CD4-positive, alpha-beta memory T cell (primary cell): ENCODE measurements at regions of chr20 and their contacts with region 1.

Region 1: DNA sequence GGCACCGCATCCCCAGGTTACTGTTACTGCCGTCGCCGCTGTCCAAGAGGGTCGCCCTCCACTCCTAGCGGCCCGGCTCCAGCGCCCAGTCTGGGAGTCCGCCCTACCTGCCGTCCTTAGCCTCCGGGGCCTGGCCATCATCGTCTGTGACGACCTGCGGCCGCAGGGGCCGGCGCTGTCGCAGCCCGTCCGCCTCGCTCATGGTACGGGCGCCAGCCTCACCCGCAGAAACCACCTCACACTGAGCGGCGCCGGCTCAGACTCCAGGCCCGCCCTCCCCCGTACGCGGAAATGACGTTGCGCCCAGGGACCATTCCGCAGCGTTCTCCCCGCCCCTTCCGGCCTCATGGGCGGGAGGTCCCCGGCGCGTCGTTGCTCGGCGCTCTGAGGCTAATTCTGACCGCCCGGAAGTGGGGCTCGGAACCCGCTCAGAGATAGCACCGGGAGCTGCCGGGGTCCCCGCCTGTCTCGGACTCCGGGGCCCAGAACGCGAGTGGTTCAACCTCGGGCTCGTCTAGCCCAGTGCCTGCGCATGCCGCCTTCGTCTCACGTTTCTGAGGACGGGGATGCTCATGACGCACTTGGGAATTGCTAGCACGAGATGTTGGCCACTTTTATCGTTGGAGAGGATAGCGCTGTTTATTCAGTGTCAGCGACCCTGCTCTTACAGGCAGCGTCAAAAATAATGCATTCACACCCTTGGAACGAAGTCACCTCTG is at the start of gene APMAP:
- DNase-seq: peak; percentile 94 to 97 (median 94)
- H3K4me3 ChIP-seq: peak within 1 kb of the TSS; percentile 55 to 93
- H3K4me3 Mint-ChIP-seq: peak within 1 kb of the TSS; percentile 93 to 98 (median 95)
- H3K27ac ChIP-seq: peak within 1 kb of the TSS; percentile 96
- H3K27ac Mint-ChIP-seq: peak within 1 kb of the TSS; percentile 95 to 99 (median 97)
- H3K4me1 ChIP-seq: peaks cover 49% of the 10 kb centered on the region
- H3K4me1 Mint-ChIP-seq: peaks cover 36 to 72% (median 54%) of the 10 kb centered on the region in 4 donors
- H3K27me3 ChIP-seq: no peaks in the 10 kb centered on the region
- H3K27me3 Mint-ChIP-seq: no peaks in the 10 kb centered on the region
- total RNA-seq, gene APMAP: 48.4 to 50.0 TPM

Region 2: GRCh38 chr20:23350196-23350903 is 1642.3 kb before region 1 on chr20 and contains the start of gene NXT1:
- CTCF ChIA-PET with region 1: no interaction called
- POLR2A ChIA-PET with region 1: no interaction called
- intact Hi-C with region 1: loop called (anchors 5 kb)
- DNase-seq: peak; percentile 96 to 98 (median 96)
- H3K4me3 ChIP-seq: peak within 1 kb of the TSS; percentile 93 to 97
- H3K4me3 Mint-ChIP-seq: peak within 1 kb of the TSS; percentile 85 to 99 (median 98)
- H3K27ac ChIP-seq: peak within 1 kb of the TSS; percentile 100
- H3K27ac Mint-ChIP-seq: peak within 1 kb of the TSS; percentile 99 to 100 (median 100)
- H3K4me1 ChIP-seq: peaks cover 21% of the 10 kb centered on the region
- H3K4me1 Mint-ChIP-seq: peaks cover 14 to 38% (median 23%) of the 10 kb centered on the region in 4 donors
- H3K27me3 ChIP-seq: no peaks in the 10 kb centered on the region
- H3K27me3 Mint-ChIP-seq: no peaks in the 10 kb centered on the region
- total RNA-seq, gene NXT1: 21.5 to 23.6 TPM

Region 3: DNA sequence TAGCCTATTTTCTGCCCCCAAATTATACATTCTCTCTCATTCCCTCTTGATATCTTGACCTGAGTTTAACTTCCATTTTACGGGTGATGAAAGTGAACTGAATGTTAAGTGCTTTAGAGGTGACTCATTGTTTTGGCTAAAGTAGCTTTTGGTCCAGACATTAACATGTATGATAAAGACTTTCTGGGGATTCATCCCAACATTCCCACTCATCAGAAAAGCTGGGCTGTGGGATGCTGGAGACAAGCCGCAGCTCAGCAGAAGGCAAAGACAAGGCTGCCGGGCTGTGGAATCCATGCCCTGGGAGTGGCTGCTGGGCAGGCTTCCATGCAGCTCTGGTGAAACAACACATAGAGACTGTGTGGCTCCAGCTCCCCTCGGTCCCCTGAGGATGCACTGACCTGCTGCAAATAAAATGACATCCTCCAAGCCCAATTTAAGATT is 613.1 kb before region 1 on chr20:
- CTCF ChIA-PET with region 1: no interaction called
- POLR2A ChIA-PET with region 1: no interaction called
- intact Hi-C with region 1: no loop called
- DNase-seq: no peak
- H3K4me3 ChIP-seq: no peak overlapping the region
- H3K4me3 Mint-ChIP-seq: no peak overlapping the region
- H3K27ac ChIP-seq: no peak overlapping the region
- H3K27ac Mint-ChIP-seq: no peak overlapping the region
- H3K4me1 ChIP-seq: no peaks in the 10 kb centered on the region
- H3K4me1 Mint-ChIP-seq: no peaks in the 10 kb centered on the region
- H3K27me3 ChIP-seq: no peaks in the 10 kb centered on the region
- H3K27me3 Mint-ChIP-seq: peaks cover 0 to 2% of the 10 kb centered on the region in 2 donors

Region 4: DNA sequence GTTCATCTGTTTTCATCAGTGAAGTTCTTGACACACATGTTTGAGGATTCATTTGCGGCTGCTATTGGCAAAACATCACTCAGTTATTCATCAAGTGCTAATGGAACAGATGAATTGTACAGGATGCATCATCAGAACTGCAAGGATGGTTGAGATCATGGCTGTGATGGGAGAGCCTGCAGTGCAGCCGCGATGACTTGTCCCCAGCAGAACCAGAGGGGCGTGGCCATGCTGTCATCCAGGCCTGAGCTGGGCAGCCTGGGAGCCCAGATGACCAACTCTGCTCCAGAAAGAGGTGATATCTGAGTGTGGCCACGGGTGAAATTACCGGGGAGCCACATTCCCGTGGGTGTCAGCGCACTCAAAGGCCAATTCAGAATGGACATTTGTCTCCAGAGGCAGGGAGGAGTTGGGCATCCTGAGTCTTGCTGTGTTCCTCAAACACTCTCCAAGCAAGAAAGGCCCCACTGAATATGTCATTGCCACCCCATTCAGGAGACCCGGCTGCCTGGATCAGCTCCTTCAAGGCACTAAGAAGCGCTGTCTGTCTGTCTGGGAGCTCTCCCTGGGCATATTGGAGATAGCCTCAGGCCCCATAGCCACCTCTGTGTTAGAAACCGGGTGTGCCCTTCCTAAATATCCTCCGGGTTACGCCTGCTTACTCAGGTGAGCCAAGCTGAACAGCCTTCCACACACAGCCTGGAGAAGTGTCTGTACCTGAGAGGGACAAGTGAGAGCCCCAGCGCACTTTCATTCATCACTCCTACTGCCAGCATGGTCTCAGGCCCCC is 456.5 kb before region 1 on chr20:
- CTCF ChIA-PET with region 1: no interaction called
- POLR2A ChIA-PET with region 1: no interaction called
- intact Hi-C with region 1: no loop called
- DNase-seq: no peak
- H3K4me3 ChIP-seq: no peak overlapping the region
- H3K4me3 Mint-ChIP-seq: no peak overlapping the region
- H3K27ac ChIP-seq: no peak overlapping the region
- H3K27ac Mint-ChIP-seq: no peak overlapping the region
- H3K4me1 ChIP-seq: no peaks in the 10 kb centered on the region
- H3K4me1 Mint-ChIP-seq: no peaks in the 10 kb centered on the region
- H3K27me3 ChIP-seq: no peaks in the 10 kb centered on the region
- H3K27me3 Mint-ChIP-seq: peaks cover 0 to 8% of the 10 kb centered on the region in 2 donors

Region 5: GRCh38 chr20:24948939-24949679 is 43.5 kb before region 1 on chr20 and contains the start of gene CST7:
- CTCF ChIA-PET with region 1: interaction called, 4 read pairs
- POLR2A ChIA-PET with region 1: interaction called, 17 read pairs
- intact Hi-C with region 1: loop called (anchors 1 kb)
- DNase-seq: peak; percentile 85 to 94 (median 87)
- H3K4me3 ChIP-seq: peak within 1 kb of the TSS in 1 of 2 donors; percentile 41
- H3K4me3 Mint-ChIP-seq: peak within 1 kb of the TSS; percentile 65 to 91 (median 84)
- H3K27ac ChIP-seq: peak within 1 kb of the TSS; percentile 65
- H3K27ac Mint-ChIP-seq: peak within 1 kb of the TSS; percentile 81 to 99 (median 96)
- H3K4me1 ChIP-seq: peaks cover 36% of the 10 kb centered on the region
- H3K4me1 Mint-ChIP-seq: peaks cover 32 to 80% (median 57%) of the 10 kb centered on the region in 4 donors
- H3K27me3 ChIP-seq: no peaks in the 10 kb centered on the region
- H3K27me3 Mint-ChIP-seq: no peaks in the 10 kb centered on the region
- total RNA-seq, gene CST7: 23.2 to 23.3 TPM

Region 6: DNA sequence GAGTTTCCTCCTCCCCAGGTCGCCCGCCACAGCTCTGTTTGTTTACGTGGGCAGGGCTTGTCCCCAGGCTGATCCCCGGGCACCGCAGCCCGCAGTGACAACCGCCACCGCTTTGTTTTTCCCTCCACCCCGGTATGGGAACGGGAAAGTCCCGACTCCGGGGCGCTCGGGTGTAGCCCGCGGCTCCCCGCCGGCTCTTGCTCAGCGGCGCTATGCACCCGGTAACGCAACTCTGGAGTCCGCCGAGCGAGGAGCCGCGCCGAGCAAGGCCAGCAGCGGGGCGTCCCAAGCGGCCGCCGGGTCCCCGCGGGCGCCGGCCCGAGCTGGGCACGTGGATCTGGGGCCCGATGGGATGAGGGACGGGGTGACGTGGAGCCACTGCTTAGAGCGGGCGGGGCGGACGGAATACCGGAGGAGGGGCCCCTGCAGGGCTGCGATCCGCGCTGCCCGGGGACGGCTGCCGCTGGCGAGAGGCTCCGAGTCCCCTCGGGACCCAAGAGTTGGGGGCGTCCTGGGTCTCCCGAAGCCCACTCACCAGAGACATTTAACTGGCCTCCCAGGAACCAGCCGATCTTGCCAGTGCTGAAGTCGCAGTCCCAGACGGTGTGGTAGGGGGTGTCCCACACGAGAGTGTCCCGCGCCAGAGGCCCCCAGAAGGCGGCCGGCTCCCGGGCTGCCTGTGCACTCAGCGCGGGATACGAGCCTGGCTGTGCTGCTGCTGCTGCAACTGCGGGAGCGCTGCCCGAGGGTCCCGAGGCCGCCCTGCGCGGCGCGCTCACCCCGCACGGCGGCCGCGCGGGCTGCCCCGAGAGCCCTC is 64.8 kb after region 1 on chr20:
- CTCF ChIA-PET with region 1: interaction called, 260 read pairs
- POLR2A ChIA-PET with region 1: interaction called, 60 read pairs
- intact Hi-C with region 1: loop called (anchors 1 kb)
- DNase-seq: peak; percentile 84 to 93 (median 87)
- H3K4me3 ChIP-seq: peak overlapping the region; percentile 17 to 84
- H3K4me3 Mint-ChIP-seq: peak overlapping the region; percentile 87 to 93 (median 90)
- H3K27ac ChIP-seq: peak overlapping the region; percentile 82
- H3K27ac Mint-ChIP-seq: peak overlapping the region; percentile 88 to 96 (median 94)
- H3K4me1 ChIP-seq: peaks cover 58% of the 10 kb centered on the region
- H3K4me1 Mint-ChIP-seq: peaks cover 35 to 68% (median 47%) of the 10 kb centered on the region in 4 donors
- H3K27me3 ChIP-seq: no peaks in the 10 kb centered on the region
- H3K27me3 Mint-ChIP-seq: peaks cover 0 to under 1% of the 10 kb centered on the region in 2 donors

Region 7: DNA sequence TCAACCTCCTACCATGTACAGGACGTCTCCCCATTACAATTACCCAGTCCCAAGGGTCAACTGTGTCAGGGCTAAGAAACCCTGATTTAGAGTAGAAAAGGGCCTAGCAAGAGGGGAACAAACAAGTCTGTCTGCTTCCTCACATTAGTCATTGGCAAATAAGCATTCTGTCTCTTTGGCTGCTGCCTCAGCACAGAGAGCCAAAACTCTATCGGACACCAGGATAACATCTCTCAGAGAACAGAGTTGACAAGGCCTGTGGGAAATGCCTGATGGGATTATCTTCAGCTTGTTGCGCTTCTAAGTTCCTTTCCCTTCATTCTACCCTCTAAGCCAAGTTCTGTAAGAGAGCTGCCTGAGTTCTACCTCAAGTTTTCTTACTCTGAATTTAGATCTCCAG is 108.3 kb after region 1 on chr20:
- CTCF ChIA-PET with region 1: no interaction called
- POLR2A ChIA-PET with region 1: no interaction called
- intact Hi-C with region 1: no loop called
- DNase-seq: no peak
- H3K4me3 ChIP-seq: no peak overlapping the region
- H3K4me3 Mint-ChIP-seq: no peak overlapping the region
- H3K27ac ChIP-seq: no peak overlapping the region
- H3K27ac Mint-ChIP-seq: no peak overlapping the region
- H3K4me1 ChIP-seq: peaks cover 7% of the 10 kb centered on the region
- H3K4me1 Mint-ChIP-seq: peaks cover 7 to 11% (median 8%) of the 10 kb centered on the region in 4 donors
- H3K27me3 ChIP-seq: no peaks in the 10 kb centered on the region
- H3K27me3 Mint-ChIP-seq: peaks cover 4 to 5% of the 10 kb centered on the region in 2 donors

Region 8: GRCh38 chr20:25178563-25179438 is 186.2 kb after region 1 on chr20:
- CTCF ChIA-PET with region 1: interaction called, 18 read pairs
- POLR2A ChIA-PET with region 1: interaction called, 3 read pairs
- intact Hi-C with region 1: loop called (anchors 1 kb)
- DNase-seq: peak; percentile 32 to 47 (median 44)
- H3K4me3 ChIP-seq: no peak overlapping the region
- H3K4me3 Mint-ChIP-seq: no peak overlapping the region
- H3K27ac ChIP-seq: no peak overlapping the region
- H3K27ac Mint-ChIP-seq: peak overlapping the region in 2 of 7 donors; percentile 69 to 78
- H3K4me1 ChIP-seq: no peaks in the 10 kb centered on the region
- H3K4me1 Mint-ChIP-seq: peaks cover 0 to 2% (median under 1%) of the 10 kb centered on the region in 4 donors
- H3K27me3 ChIP-seq: no peaks in the 10 kb centered on the region
- H3K27me3 Mint-ChIP-seq: peaks cover 4 to 6% of the 10 kb centered on the region in 2 donors

Region 9: GRCh38 chr20:25294459-25295385 is 302.1 kb after region 1 on chr20:
- CTCF ChIA-PET with region 1: interaction called, 4 read pairs
- POLR2A ChIA-PET with region 1: no interaction called
- intact Hi-C with region 1: loop called (anchors 10 kb)
- DNase-seq: peak; percentile 33 to 44 (median 42)
- H3K4me3 ChIP-seq: no peak overlapping the region
- H3K4me3 Mint-ChIP-seq: no peak overlapping the region
- H3K27ac ChIP-seq: no peak overlapping the region
- H3K27ac Mint-ChIP-seq: peak overlapping the region in 4 of 7 donors; percentile 41 to 72 (median 55)
- H3K4me1 ChIP-seq: no peaks in the 10 kb centered on the region
- H3K4me1 Mint-ChIP-seq: peaks cover 0 to 4% (median 2%) of the 10 kb centered on the region in 4 donors
- H3K27me3 ChIP-seq: no peaks in the 10 kb centered on the region
- H3K27me3 Mint-ChIP-seq: no peaks in the 10 kb centered on the region

Region 10: DNA sequence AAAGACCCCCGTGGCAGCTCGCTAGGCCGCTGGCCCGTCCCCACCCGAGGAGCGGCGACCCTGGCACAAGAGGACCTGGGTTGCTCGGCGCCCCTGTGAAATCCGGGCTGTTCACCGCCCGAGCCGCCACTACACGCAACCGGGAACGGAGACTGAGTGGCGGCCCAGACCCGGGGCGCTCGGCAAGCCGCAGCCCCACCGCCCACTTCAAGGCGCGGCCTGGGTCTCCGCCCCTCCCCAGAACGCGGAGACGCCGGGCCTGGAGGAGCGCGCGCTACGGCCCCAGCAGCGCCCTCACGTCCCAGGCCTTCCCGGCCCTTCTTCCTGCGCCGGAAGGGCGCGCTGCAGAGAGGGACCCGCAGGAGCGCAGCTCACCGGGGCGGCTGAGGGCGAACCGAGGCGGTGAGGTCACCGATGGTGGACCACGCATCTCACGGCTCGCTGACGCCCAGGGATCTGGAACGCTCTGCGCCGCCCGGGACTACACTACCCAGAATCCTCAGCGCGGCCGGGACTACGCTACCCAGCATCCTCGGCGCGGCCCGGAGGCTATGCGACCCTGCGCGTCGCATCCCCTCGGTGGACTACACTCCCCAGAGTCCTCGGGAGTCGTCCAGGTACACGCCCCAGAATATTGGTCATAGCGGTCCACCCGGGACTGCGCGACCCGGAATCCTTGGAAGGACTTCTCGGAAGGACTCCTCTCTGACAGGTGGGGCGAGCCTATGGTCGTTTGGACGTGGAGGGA is 703.9 kb after region 1 on chr20 and contains the start of gene ZNF337:
- CTCF ChIA-PET with region 1: no interaction called
- POLR2A ChIA-PET with region 1: no interaction called
- intact Hi-C with region 1: loop called (anchors 1 kb)
- DNase-seq: peak; percentile 88 to 92 (median 90)
- H3K4me3 ChIP-seq: peak within 1 kb of the TSS; percentile 63 to 79
- H3K4me3 Mint-ChIP-seq: peak within 1 kb of the TSS; percentile 92 to 99 (median 96)
- H3K27ac ChIP-seq: peak within 1 kb of the TSS; percentile 71
- H3K27ac Mint-ChIP-seq: peak within 1 kb of the TSS; percentile 93 to 97 (median 94)
- H3K4me1 ChIP-seq: peaks cover 19% of the 10 kb centered on the region
- H3K4me1 Mint-ChIP-seq: peaks cover 27 to 48% (median 35%) of the 10 kb centered on the region in 4 donors
- H3K27me3 ChIP-seq: no peaks in the 10 kb centered on the region
- H3K27me3 Mint-ChIP-seq: no peaks in the 10 kb centered on the region
- total RNA-seq, gene ZNF337: 34.8 to 36.6 TPM